CD8-positive, alpha-beta T cell (primary cell): ENCODE measurements at regions of chr10 and their contacts with region 1.

Region 1: DNA sequence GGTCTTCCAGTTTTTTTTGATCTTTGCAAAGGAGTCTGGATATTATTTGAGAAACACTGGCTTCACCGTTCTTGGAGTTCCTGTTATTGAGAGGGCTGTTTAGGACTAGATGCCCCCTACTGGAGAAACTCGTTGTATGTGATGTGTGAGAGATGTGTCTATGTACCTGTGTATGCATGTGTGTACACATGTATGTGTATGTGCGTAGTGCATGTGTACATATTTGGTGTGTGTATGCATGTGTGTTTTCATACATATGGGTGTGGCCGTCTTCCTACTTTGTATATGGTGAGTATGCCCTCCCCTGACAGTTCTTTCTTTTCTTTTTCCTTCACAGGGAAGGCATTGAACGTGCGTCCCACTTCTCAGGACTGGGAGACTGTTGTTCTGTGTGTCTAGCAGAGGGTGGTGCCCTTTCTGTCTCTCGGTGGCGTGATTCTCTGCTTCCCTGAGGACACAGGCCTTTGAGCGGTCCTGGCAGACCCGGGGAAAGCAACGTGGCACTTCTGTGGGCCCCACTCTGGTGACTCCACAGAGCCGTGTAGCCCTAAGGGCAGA is 3.0 kb upstream of the CALHM3 start:
- DNase-seq: peak in 3 of 9 experiments; percentile 51 to 86 (median 80)
- ATAC-seq: peak; percentile 78
- H3K4me3 ChIP-seq: no peak overlapping the region
- H3K4me3 Mint-ChIP-seq: no peak overlapping the region
- H3K27ac ChIP-seq: no peak overlapping the region
- H3K27ac Mint-ChIP-seq: no peak overlapping the region
- H3K4me1 ChIP-seq: no peaks in the 10 kb centered on the region
- H3K4me1 Mint-ChIP-seq: peaks cover 6% of the 10 kb centered on the region
- H3K27me3 ChIP-seq: no peaks in the 10 kb centered on the region
- H3K27me3 Mint-ChIP-seq: peaks cover 3% of the 10 kb centered on the region
- CTCF ChIP-seq: peak; percentile 77

Region 2: GRCh38 chr10:103192451-103193106 is 289.5 kb before region 1 on chr10:
- CTCF ChIA-PET with region 1: no interaction called
- POLR2A ChIA-PET with region 1: no interaction called
- intact Hi-C with region 1: loop called in 1 of 2 experiments (anchors 5 kb)
- DNase-seq: peak; percentile 19 to 74 (median 51)
- ATAC-seq: peak; percentile 64
- H3K4me3 ChIP-seq: peak overlapping the region; percentile 68 to 85
- H3K4me3 Mint-ChIP-seq: peak overlapping the region; percentile 97
- H3K27ac ChIP-seq: peak overlapping the region; percentile 76 to 88
- H3K27ac Mint-ChIP-seq: peak overlapping the region; percentile 96
- H3K4me1 ChIP-seq: peaks cover 25% of the 10 kb centered on the region
- H3K4me1 Mint-ChIP-seq: peaks cover 41% of the 10 kb centered on the region
- H3K27me3 ChIP-seq: no peaks in the 10 kb centered on the region
- H3K27me3 Mint-ChIP-seq: no peaks in the 10 kb centered on the region
- CTCF ChIP-seq: no peak

Region 3: DNA sequence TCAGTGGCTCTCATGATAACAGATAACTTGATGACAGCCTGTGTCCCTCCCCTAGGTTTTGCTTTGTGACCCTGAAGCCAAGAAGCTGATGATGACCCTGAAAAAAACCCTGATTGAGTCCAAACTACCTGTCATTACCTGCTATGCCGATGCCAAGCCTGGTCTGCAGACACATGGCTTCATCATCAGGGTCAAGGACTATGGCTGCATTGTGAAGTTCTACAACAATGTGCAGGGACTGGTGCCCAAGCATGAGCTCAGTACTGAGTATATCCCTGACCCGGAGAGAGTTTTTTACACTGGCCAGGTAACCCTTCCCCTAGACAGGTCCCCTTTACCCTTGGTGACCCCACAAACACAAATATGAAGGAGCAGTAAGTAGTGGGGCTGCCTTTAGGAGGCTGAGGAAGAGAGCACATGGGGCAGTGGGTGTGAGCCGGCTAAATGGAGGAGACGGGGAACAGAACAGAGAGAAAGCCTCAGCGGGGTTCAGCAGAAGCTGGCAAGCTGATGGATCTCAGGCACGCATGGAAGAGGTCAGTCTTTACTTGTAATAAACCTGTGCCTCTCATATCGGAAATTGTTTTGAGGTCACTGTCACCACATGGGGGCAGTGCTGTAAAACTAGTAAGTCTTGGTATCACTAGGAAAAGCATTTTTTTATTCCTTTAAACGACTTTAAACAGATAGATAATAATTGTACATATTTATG is 65.5 kb before region 1 on chr10:
- CTCF ChIA-PET with region 1: interaction called, 272 read pairs
- POLR2A ChIA-PET with region 1: no interaction called
- intact Hi-C with region 1: loop called (anchors 1 kb)
- DNase-seq: peak; percentile 31 to 81 (median 70)
- ATAC-seq: peak; percentile 40
- H3K4me3 ChIP-seq: no peak overlapping the region
- H3K4me3 Mint-ChIP-seq: no peak overlapping the region
- H3K27ac ChIP-seq: no peak overlapping the region
- H3K27ac Mint-ChIP-seq: no peak overlapping the region
- H3K4me1 ChIP-seq: no peaks in the 10 kb centered on the region
- H3K4me1 Mint-ChIP-seq: peaks cover 3% of the 10 kb centered on the region
- H3K27me3 ChIP-seq: no peaks in the 10 kb centered on the region
- H3K27me3 Mint-ChIP-seq: no peaks in the 10 kb centered on the region
- CTCF ChIP-seq: peak; percentile 75

Region 4: DNA sequence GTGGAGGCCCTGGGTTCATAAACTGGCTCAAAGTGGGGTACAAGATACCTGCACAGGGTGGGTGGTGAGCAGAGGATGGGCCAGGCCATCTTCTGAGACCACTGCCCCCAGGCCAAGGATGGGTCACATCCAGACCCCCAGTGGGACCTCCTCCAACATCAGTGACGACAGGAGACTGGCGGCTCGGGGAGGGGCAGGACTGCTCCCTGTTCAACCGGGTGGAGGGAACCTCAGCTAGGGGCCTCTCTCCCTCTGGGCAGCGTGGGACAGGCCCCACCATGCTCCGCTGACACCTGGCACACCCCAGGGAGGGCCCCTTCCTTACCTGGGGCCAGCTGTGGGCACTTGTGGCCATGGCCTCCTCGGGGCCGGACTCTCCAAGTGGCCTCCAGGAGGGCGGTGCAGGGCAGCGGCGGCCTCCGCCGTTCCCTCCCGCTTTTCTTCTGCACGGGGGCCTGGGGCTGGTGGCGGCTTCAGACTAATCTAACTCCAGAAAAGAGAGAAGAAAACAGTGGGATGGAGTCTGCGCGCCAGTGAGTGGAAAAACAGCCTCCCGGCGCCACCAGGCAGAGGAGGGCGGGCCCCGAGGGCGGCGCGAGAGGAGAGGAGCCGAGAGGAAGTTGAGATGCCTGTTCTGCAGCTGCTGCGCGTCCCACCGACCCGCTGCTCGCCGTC is 30.1 kb before region 1 on chr10 and contains the start of gene CALHM2:
- CTCF ChIA-PET with region 1: interaction called, 19 read pairs
- POLR2A ChIA-PET with region 1: interaction called, 3 read pairs
- intact Hi-C with region 1: loop called (anchors 1 to 2 kb)
- DNase-seq: peak; percentile 18 to 81 (median 57)
- ATAC-seq: peak; percentile 70
- H3K4me3 ChIP-seq: peak within 1 kb of the TSS; percentile 78 to 97
- H3K4me3 Mint-ChIP-seq: peak within 1 kb of the TSS; percentile 92
- H3K27ac ChIP-seq: peak within 1 kb of the TSS; percentile 43 to 76
- H3K27ac Mint-ChIP-seq: peak within 1 kb of the TSS; percentile 84
- H3K4me1 ChIP-seq: peaks cover 45% of the 10 kb centered on the region
- H3K4me1 Mint-ChIP-seq: peaks cover 51% of the 10 kb centered on the region
- H3K27me3 ChIP-seq: no peaks in the 10 kb centered on the region
- H3K27me3 Mint-ChIP-seq: no peaks in the 10 kb centered on the region
- CTCF ChIP-seq: no peak
- total RNA-seq, gene CALHM2: 1.6 to 1.7 TPM

Region 5: DNA sequence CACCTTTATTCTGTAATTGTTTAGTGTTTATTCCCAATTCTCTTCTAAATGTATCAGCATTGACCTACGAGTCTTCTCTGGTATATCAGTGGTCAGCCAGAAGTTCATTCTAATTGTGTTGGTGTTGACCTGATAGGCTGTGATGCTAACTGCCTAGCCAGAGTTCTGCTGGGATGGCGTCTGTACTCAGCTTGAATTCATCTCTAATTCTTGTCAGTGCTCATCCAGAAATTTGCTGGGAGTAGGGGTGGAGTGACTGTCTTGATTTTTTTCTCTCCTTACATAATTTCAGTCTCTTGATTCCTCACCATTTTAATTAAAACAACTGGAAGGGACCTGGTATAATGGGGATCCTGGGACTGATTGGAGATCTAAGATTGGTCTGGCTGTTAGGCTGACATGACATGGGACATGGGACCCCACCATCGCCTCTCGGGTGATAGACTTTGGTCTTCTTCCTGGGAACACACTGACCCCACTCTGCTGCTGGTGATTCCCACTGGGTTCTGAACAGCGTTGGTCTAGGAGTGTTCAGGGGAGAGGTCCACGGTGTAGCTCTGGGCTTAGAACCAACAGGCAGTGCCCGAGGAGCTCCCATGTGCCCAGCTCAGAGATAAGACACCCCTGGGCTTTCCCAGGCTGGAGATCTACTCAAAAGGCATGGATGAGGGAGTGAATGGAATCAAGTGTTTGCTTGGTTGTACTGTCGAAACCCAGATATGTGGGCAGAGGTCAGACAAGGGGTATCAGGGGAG is 15.3 kb after region 1 on chr10:
- CTCF ChIA-PET with region 1: interaction called, 11 read pairs
- POLR2A ChIA-PET with region 1: no interaction called
- intact Hi-C with region 1: no loop called
- DNase-seq: no peak
- ATAC-seq: no peak
- H3K4me3 ChIP-seq: no peak overlapping the region
- H3K4me3 Mint-ChIP-seq: no peak overlapping the region
- H3K27ac ChIP-seq: no peak overlapping the region
- H3K27ac Mint-ChIP-seq: no peak overlapping the region
- H3K4me1 ChIP-seq: peaks cover 13% of the 10 kb centered on the region
- H3K4me1 Mint-ChIP-seq: peaks cover 11% of the 10 kb centered on the region
- H3K27me3 ChIP-seq: peaks cover 8 to 9% of the 10 kb centered on the region in 2 experiments
- H3K27me3 Mint-ChIP-seq: peaks cover 41% of the 10 kb centered on the region
- CTCF ChIP-seq: no peak

Region 6: GRCh38 chr10:103602028-103602851 is 120.2 kb after region 1 on chr10:
- CTCF ChIA-PET with region 1: no interaction called
- POLR2A ChIA-PET with region 1: no interaction called
- intact Hi-C with region 1: no loop called
- DNase-seq: no peak
- ATAC-seq: no peak
- H3K4me3 ChIP-seq: no peak overlapping the region
- H3K4me3 Mint-ChIP-seq: no peak overlapping the region
- H3K27ac ChIP-seq: no peak overlapping the region
- H3K27ac Mint-ChIP-seq: no peak overlapping the region
- H3K4me1 ChIP-seq: no peaks in the 10 kb centered on the region
- H3K4me1 Mint-ChIP-seq: no peaks in the 10 kb centered on the region
- H3K27me3 ChIP-seq: no peaks in the 10 kb centered on the region
- H3K27me3 Mint-ChIP-seq: no peaks in the 10 kb centered on the region
- CTCF ChIP-seq: no peak